AG04449 (cell line): ENCODE measurements at regions of chr4 and their contacts with region 1.

Region 1: GRCh38 chr4:40316782-40317635 is 18.1 kb upstream of the CHRNA9 start:
- DNase-seq: peak; percentile 79
- H3K4me3 ChIP-seq: peak overlapping the region; percentile 43
- CTCF ChIP-seq: peak; percentile 70

Region 2: GRCh38 chr4:40056716-40057585 is 260.1 kb before region 1 on chr4 and contains the start of gene N4BP2:
- CTCF ChIA-PET with region 1: interaction called, 25 read pairs
- POLR2A ChIA-PET with region 1: interaction called, 5 read pairs
- DNase-seq: no peak
- H3K4me3 ChIP-seq: peak within 1 kb of the TSS; percentile 80
- CTCF ChIP-seq: peak; percentile 88

Region 3: GRCh38 chr4:40143926-40144508 is 173.0 kb before region 1 on chr4:
- CTCF ChIA-PET with region 1: interaction called, 13 read pairs
- POLR2A ChIA-PET with region 1: no interaction called
- DNase-seq: no peak
- H3K4me3 ChIP-seq: no peak overlapping the region
- CTCF ChIP-seq: no peak

Region 4: DNA sequence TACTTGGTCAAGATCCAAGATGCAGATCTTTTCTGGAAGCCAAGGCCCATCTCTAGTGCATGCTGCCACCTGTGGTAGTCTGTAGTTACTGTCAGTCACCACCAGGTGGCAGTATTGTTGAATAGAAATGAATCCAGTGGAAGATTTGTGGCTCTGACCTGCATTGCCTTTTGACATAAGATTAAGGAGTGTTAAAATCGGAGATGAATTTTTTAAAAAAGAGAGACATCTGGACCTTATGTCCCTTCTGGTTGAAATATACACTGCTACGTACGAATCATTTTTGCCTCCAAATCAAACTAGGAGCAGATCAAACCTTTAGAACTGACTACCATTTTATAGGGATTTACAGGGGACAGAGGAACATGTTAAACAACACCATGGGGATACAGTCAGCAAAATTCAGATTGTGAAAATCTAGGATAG is 167.0 kb before region 1 on chr4:
- CTCF ChIA-PET with region 1: interaction called, 89 read pairs
- POLR2A ChIA-PET with region 1: interaction called, 7 read pairs
- DNase-seq: no peak
- H3K4me3 ChIP-seq: no peak overlapping the region
- CTCF ChIP-seq: peak; percentile 72

Region 5: DNA sequence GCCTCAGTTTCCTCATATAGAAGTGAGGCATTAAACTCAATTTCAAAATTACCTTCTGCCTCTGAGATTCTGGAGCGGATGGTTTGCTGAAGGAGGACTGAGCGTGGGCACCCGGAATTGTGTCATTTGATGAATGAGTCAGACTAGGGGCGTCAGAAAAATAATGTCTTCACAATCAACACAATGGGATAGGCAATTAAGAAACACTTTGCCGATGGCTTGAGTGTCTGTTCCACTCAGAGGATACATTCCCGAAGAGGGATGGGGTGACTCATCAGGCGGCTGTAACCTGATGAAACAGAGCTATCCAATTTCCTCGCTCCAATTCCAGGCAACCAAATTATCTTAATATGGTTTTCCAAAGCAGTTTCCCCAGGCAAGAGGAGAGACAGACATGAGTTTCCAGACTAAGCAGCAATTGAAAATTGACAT is 16.9 kb after region 1 on chr4:
- CTCF ChIA-PET with region 1: interaction called, 62 read pairs
- POLR2A ChIA-PET with region 1: interaction called, 4 read pairs
- DNase-seq: no peak
- H3K4me3 ChIP-seq: no peak overlapping the region
- CTCF ChIP-seq: no peak

Region 6: DNA sequence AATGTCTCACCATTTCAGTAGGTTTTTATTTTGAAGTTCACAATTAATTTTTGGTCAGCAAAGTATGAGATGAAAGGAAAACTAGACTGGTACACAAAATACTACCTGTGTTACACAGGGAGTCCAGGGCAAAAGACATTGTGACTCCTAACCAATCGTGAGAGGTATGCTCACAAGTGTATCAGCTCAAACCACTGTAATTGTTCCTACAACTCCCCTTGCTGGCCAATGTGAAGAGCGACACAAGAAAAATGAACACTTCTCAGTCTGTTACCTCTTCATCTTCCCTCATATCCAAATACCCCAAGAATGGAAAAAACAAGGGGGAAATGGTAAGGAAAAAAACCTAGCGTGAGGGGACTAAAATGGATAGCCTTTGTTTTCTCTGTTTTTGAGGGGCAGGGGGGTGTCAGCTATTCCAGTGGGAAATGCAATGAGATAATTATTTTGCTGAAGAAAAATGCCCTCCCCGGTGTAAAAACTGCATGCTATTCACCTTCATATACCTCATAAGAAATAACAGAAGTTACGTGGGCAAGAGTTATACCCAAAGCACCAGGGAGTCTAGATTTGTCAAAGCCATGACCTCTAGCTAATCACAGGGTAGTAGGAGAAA is 402.1 kb after region 1 on chr4:
- CTCF ChIA-PET with region 1: interaction called, 18 read pairs
- POLR2A ChIA-PET with region 1: no interaction called
- DNase-seq: no peak
- H3K4me3 ChIP-seq: no peak overlapping the region
- CTCF ChIP-seq: peak; percentile 58